Activated naive CD8-positive, alpha-beta T cell treated with anti-CD3 and anti-CD28 coated beads, Interleukin-2, amount 10 ng/mL, durations not matched to agents 7 days and 5 days (primary cell): ENCODE measurements at regions of chr12 and their contacts with region 1.

Region 1: GRCh38 chr12:120249875-120250795 is 15.4 kb downstream of the PXN start:
- DNase-seq: peak; percentile 48
- ATAC-seq: peak; percentile 4
- H3K4me3 Mint-ChIP-seq: peak overlapping the region; percentile 80
- H3K27ac Mint-ChIP-seq: peak overlapping the region; percentile 90
- H3K4me1 Mint-ChIP-seq: peaks cover 59% of the 10 kb centered on the region
- H3K27me3 Mint-ChIP-seq: peaks cover 2% of the 10 kb centered on the region

Region 2: DNA sequence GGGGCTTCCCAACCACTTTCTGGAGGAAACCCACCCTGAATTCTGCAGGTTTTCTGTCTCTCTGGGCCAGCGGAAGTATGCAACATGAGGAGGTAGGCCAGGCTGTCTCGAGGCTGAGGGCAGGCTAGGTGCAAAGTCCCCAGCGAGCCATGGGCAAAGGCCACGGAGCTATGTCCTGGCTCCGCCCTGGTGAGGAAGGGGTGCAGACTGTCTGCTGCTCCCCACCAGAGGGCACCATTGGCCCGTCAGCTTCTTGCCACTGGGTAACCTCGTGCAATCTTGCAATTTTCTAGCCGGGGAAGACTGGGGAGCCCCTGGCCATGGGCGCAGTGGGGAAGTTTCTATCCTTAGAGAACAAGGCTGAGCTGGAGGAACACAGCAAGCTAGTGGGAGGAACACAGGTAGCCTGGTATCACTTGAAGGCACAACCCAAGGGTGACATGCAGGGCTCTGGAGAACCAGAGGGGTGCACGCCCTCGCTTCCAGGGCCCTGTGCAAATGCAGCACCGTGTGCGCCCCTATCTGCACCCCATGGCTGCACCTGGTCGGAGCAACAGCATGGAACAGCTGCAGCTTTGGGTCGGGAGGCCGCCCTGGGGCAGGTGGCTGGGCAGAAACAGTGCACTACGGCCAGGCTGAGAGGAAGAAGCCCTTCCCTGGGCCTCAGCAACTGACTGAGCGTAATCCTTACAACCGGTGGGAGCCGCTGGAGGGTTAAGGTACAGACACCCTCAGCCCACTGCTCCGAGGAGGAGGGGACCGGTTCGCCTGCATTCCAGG is 21.7 kb before region 1 on chr12:
- POLR2A ChIA-PET with region 1: interaction called, 107 read pairs
- DNase-seq: peak; percentile 89
- ATAC-seq: peak; percentile 69
- H3K4me3 Mint-ChIP-seq: peak overlapping the region; percentile 58
- H3K27ac Mint-ChIP-seq: peak overlapping the region; percentile 51
- H3K4me1 Mint-ChIP-seq: peaks cover 65% of the 10 kb centered on the region
- H3K27me3 Mint-ChIP-seq: no peaks in the 10 kb centered on the region

Region 3: GRCh38 chr12:120234643-120235368 is 15.3 kb before region 1 on chr12:
- POLR2A ChIA-PET with region 1: interaction called, 107 read pairs
- DNase-seq: no peak
- ATAC-seq: no peak
- H3K4me3 Mint-ChIP-seq: no peak overlapping the region
- H3K27ac Mint-ChIP-seq: no peak overlapping the region
- H3K4me1 Mint-ChIP-seq: peaks cover 47% of the 10 kb centered on the region
- H3K27me3 Mint-ChIP-seq: no peaks in the 10 kb centered on the region